Esophagus muscularis mucosa (tissue), 4 donors: ENCODE measurements at regions of chr1 and their contacts with region 1.

Region 1: DNA sequence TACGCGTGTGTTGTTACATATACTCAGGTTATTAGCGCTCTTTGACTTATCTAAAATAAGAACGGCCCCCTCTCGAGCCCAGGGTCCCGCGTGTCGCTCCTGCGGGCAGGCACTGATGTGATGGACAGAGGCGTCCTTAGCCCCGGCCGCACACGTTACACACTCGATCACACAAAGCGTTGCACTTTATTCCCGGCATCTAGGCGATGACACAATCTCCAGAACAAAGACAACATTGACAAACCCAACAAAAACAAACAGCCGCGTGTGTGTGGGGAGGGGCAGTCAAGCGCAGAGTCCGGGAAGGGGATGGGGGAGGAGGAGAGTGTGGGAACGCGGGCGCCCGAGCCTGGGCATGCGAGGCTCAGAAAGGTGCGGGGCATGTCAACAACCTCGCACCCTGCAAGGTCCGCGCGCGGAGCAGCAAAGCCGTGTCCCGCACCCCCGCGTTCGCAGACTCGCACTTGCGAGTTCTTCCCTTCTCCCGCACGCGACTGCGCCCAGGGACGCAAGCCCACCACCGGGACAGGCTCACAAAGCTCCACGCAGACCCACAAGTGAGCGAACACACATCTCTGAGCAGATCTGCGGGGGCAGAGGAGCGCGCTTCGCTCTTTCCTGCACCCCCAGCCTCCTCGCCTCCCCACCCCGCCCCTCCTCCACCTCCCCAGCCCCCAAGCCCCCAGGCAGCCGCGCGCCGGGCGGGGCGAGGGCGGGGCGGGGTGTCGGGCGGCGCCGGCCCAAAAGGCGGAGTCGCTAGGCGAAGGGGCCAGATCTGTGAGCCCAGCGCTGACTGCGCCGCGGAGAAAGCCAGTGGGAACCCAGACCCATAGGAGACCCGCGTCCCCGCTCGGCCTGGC is at the start of gene EFNA1:
- DNase-seq: peak; percentile 93
- H3K4me3 ChIP-seq: peak within 1 kb of the TSS; percentile 63 to 71 (median 68)
- H3K27ac ChIP-seq: peak within 1 kb of the TSS; percentile 85 to 97 (median 89)
- H3K4me1 ChIP-seq: peaks cover 62 to 68% (median 66%) of the 10 kb centered on the region in 4 donors
- H3K27me3 ChIP-seq: no peaks in the 10 kb centered on the region
- CTCF ChIP-seq: no peak
- EP300 ChIP-seq: peak; percentile 52
- POLR2A ChIP-seq: no peak
- total RNA-seq, gene EFNA1: 11.2 to 37.3 (median 27.5) TPM

Region 2: GRCh38 chr1:154344977-154345837 is 782.1 kb before region 1 on chr1:
- intact Hi-C with region 1: no loop called
- DNase-seq: no peak
- H3K4me3 ChIP-seq: no peak overlapping the region
- H3K27ac ChIP-seq: no peak overlapping the region
- H3K4me1 ChIP-seq: peaks cover 0 to 2% (median under 1%) of the 10 kb centered on the region in 4 donors
- H3K27me3 ChIP-seq: no peaks in the 10 kb centered on the region
- CTCF ChIP-seq: peak; percentile 50 to 69 (median 50)
- EP300 ChIP-seq: no peak
- POLR2A ChIP-seq: no peak

Region 3: GRCh38 chr1:155091071-155091709 is 36.1 kb before region 1 on chr1:
- intact Hi-C with region 1: loop called (anchors 5 kb)
- DNase-seq: peak; percentile 96
- H3K4me3 ChIP-seq: no peak overlapping the region
- H3K27ac ChIP-seq: peak overlapping the region in 1 of 4 donors; percentile 15
- H3K4me1 ChIP-seq: peaks cover 23 to 53% (median 38%) of the 10 kb centered on the region in 4 donors
- H3K27me3 ChIP-seq: no peaks in the 10 kb centered on the region
- CTCF ChIP-seq: peak in 2 of 3 experiments; percentile 97 to 98
- EP300 ChIP-seq: no peak
- POLR2A ChIP-seq: no peak

Region 4: DNA sequence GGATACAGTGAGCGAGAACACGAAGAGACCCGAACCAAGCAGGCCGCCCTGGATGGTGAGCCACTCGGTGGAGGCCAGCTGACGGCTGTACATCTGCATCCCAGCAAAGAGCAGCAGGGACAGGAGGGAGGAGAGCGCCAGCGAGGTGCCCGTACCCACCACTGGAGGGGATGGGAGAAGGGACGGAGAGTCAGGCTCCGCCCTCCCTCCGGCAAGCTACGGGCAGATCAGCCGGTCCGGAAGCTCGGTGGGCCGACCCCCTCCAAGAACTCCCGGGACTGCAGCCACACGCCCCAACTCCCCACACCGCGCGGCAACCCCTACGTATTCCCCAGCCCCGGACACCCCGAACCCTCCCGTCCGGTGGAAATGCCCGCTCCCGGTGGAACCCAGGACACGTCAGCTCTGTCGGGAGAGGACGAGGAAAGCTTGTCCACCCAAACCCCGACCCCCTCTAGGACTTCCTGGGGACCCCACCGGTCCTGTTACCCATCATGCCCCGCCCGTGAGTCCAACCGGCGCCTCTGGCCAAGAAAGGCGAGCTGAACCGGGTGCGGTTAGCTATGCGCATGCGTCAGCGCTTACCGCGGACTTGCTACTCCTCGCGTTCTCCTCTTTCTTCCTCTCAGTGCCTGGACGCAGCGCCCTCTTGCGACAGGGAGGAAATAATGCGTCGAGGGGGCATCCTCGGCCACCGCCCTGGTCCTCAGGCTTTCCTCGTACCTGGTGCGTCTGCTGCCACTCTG is 45.6 kb after region 1 on chr1 and contains the start of gene KRTCAP2:
- intact Hi-C with region 1: loop called (anchors 5 kb)
- DNase-seq: peak; percentile 97
- H3K4me3 ChIP-seq: peak within 1 kb of the TSS; percentile 71 to 90 (median 84)
- H3K27ac ChIP-seq: peak within 1 kb of the TSS; percentile 91 to 97 (median 94)
- H3K4me1 ChIP-seq: peaks cover 26 to 61% (median 44%) of the 10 kb centered on the region in 4 donors
- H3K27me3 ChIP-seq: peaks cover 0 to 24% (median 14%) of the 10 kb centered on the region in 4 donors
- CTCF ChIP-seq: peak; percentile 94 to 99 (median 96)
- EP300 ChIP-seq: no peak
- POLR2A ChIP-seq: peak; percentile 54
- total RNA-seq, gene KRTCAP2: 76.0 to 146 (median 108) TPM